Heart left ventricle (tissue), 16 donors: ENCODE measurements at regions of chr1 and their contacts with region 1.

Region 1: DNA sequence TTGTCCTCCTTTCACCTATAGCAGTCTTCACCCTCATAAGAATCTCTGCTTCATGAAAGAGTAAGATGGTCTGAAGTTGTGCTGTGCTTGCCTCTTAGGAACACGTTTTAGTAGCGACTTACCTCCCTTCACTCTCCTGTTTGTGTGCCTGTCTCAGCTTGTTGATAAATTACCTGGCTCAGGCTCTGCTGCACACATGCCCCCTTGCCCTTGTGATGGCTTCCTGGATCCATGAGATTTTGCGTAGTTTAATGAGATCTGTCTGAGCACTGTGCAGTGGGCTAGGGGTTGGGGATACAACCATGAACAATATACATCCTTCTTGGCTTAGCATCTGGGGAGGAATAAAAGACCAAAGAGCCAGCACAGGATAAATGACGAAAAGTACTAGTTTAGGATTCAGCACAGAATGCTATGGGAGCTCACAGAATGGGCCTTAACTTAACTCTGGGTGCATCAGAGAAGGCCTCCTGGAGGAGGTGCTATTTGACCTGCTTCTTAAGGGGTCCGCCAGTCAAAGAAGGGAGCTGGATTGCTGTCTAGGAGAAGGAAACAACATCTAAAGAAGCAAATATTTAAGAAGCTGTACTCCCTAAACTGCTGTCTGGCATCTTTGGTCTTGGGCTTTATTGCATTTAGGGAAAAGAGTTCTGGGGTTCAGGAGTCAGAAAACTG is 175.7 kb upstream of the PLXNA2 start:
- DNase-seq: no peak
- ATAC-seq: no peak
- H3K4me3 ChIP-seq: no peak overlapping the region
- H3K27ac ChIP-seq: no peak overlapping the region
- H3K4me1 ChIP-seq: no peaks in the 10 kb centered on the region
- H3K27me3 ChIP-seq: no peaks in the 10 kb centered on the region
- CTCF ChIP-seq: no peak
- POLR2A ChIP-seq: no peak

Region 2: DNA sequence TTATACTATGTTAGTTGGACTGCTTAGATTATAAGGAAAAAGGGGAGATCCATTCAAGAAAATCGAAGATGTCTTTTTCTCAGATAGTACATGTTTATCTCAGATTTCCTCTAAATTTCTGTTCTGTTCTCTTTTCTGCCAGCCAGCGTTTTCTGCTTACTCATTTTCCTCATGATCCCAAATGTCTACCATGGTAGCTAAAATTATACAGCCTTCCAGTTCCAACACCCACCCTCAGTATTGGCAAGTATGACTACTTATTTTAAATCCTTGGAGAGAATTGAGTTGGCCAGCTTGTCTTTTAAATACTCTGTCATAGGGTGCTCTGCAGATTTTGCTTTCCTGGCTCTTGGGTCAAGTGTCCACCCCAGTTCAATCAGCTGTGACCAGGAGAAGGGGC is 80.0 kb before region 1 on chr1:
- intact Hi-C with region 1: loop called in 1 of 10 experiments (anchors 2 kb)
- DNase-seq: no peak
- ATAC-seq: no peak
- H3K4me3 ChIP-seq: no peak overlapping the region
- H3K27ac ChIP-seq: no peak overlapping the region
- H3K4me1 ChIP-seq: no peaks in the 10 kb centered on the region
- H3K27me3 ChIP-seq: no peaks in the 10 kb centered on the region
- CTCF ChIP-seq: no peak
- POLR2A ChIP-seq: no peak

Region 3: GRCh38 chr1:208520438-208521099 is 100.7 kb after region 1 on chr1:
- intact Hi-C with region 1: no loop called
- DNase-seq: no peak
- ATAC-seq: no peak
- H3K4me3 ChIP-seq: no peak overlapping the region
- H3K27ac ChIP-seq: no peak overlapping the region
- H3K4me1 ChIP-seq: no peaks in the 10 kb centered on the region
- H3K27me3 ChIP-seq: no peaks in the 10 kb centered on the region
- CTCF ChIP-seq: no peak
- POLR2A ChIP-seq: no peak

Region 4: GRCh38 chr1:208541225-208541855 is 121.5 kb after region 1 on chr1:
- intact Hi-C with region 1: no loop called
- DNase-seq: no peak
- ATAC-seq: no peak
- H3K4me3 ChIP-seq: no peak overlapping the region
- H3K27ac ChIP-seq: no peak overlapping the region
- H3K4me1 ChIP-seq: peaks cover 0 to 13% (median 0%) of the 10 kb centered on the region in 12 donors
- H3K27me3 ChIP-seq: no peaks in the 10 kb centered on the region
- CTCF ChIP-seq: no peak
- POLR2A ChIP-seq: no peak

Region 5: GRCh38 chr1:208820580-208821212 is 400.8 kb after region 1 on chr1:
- intact Hi-C with region 1: no loop called
- DNase-seq: no peak
- ATAC-seq: no peak
- H3K4me3 ChIP-seq: no peak overlapping the region
- H3K27ac ChIP-seq: no peak overlapping the region
- H3K4me1 ChIP-seq: no peaks in the 10 kb centered on the region
- H3K27me3 ChIP-seq: no peaks in the 10 kb centered on the region
- CTCF ChIP-seq: no peak
- POLR2A ChIP-seq: no peak